Caco-2 (cell line): ENCODE measurements at regions of chr6 and their contacts with region 1.

Region 1: GRCh38 chr6:132530293-132530974 is 7.6 kb upstream of the TAAR9 start:
- DNase-seq: peak; percentile 57 to 72
- H3K4me3 ChIP-seq: peak overlapping the region; percentile 9; the same call in 1 of the 2 replicates
- H3K4me3 Mint-ChIP-seq: no peak overlapping the region
- H3K27ac Mint-ChIP-seq: no peak overlapping the region
- H3K4me1 ChIP-seq: no peaks in the 10 kb centered on the region
- H3K4me1 Mint-ChIP-seq: no peaks in the 10 kb centered on the region
- H3K27me3 ChIP-seq: no peaks in the 10 kb centered on the region
- H3K27me3 Mint-ChIP-seq: no peaks in the 10 kb centered on the region
- CTCF ChIP-seq: peak; percentile 70 to 73

Region 2: GRCh38 chr6:132633362-132633761 is 102.9 kb after region 1 on chr6:
- CTCF ChIA-PET with region 1: no interaction called
- POLR2A ChIA-PET with region 1: no interaction called
- intact Hi-C with region 1: no loop called
- DNase-seq: no peak
- H3K4me3 ChIP-seq: no peak overlapping the region
- H3K4me3 Mint-ChIP-seq: no peak overlapping the region
- H3K27ac Mint-ChIP-seq: no peak overlapping the region
- H3K4me1 ChIP-seq: peaks cover 21% of the 10 kb centered on the region
- H3K4me1 Mint-ChIP-seq: peaks cover 13% of the 10 kb centered on the region
- H3K27me3 ChIP-seq: no peaks in the 10 kb centered on the region
- H3K27me3 Mint-ChIP-seq: no peaks in the 10 kb centered on the region
- CTCF ChIP-seq: no peak

Region 3: DNA sequence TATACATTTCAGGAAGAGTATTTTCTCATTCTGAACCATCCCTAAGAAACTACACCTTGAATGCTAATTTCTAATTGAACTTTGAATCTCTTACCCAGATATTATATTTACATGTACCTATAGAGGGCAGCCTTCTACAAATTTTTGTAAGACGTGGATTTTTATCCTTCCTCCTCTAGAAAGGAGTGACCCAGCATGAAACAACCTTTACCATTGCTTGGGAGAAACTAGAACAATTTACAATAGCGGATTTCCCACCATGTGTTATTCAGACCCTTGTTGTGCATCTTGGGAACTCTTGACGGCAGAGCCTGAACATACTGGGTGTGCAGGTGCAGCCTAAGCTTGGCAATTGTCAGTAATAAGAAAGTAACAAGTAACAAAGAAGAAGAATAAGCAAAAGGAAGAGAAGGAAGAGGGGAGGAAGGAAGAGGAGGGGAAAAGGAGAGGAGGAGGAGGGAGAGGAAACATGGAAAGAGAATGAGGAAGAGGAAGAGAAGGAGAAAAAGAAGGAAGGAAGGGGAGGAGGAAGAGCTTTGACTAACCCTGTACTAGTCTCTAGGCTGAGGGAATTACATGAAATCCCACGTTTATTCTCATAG is 139.4 kb after region 1 on chr6:
- CTCF ChIA-PET with region 1: no interaction called
- POLR2A ChIA-PET with region 1: no interaction called
- intact Hi-C with region 1: loop called (anchors 1 kb)
- DNase-seq: peak in 1 of 2 experiments; percentile 16
- H3K4me3 ChIP-seq: no peak overlapping the region
- H3K4me3 Mint-ChIP-seq: peak overlapping the region; percentile 22
- H3K27ac Mint-ChIP-seq: peak overlapping the region; percentile 40
- H3K4me1 ChIP-seq: peaks cover 42% of the 10 kb centered on the region
- H3K4me1 Mint-ChIP-seq: peaks cover 36% of the 10 kb centered on the region
- H3K27me3 ChIP-seq: no peaks in the 10 kb centered on the region
- H3K27me3 Mint-ChIP-seq: no peaks in the 10 kb centered on the region
- CTCF ChIP-seq: peak in 1 of 2 experiments; percentile 38

Region 4: GRCh38 chr6:132768051-132768517 is 237.7 kb after region 1 on chr6:
- CTCF ChIA-PET with region 1: interaction called, 5 read pairs
- POLR2A ChIA-PET with region 1: no interaction called
- intact Hi-C with region 1: loop called (anchors 1 kb)
- DNase-seq: peak; percentile 42 to 44
- H3K4me3 ChIP-seq: no peak overlapping the region
- H3K4me3 Mint-ChIP-seq: no peak overlapping the region
- H3K27ac Mint-ChIP-seq: no peak overlapping the region
- H3K4me1 ChIP-seq: no peaks in the 10 kb centered on the region
- H3K4me1 Mint-ChIP-seq: no peaks in the 10 kb centered on the region
- H3K27me3 ChIP-seq: no peaks in the 10 kb centered on the region
- H3K27me3 Mint-ChIP-seq: no peaks in the 10 kb centered on the region
- CTCF ChIP-seq: peak; percentile 22 to 55

Region 5: GRCh38 chr6:132798869-132799538 is 268.6 kb after region 1 on chr6:
- CTCF ChIA-PET with region 1: interaction called, 4 read pairs
- POLR2A ChIA-PET with region 1: no interaction called
- intact Hi-C with region 1: loop called (anchors 1 kb)
- DNase-seq: peak; percentile 78 to 79
- H3K4me3 ChIP-seq: peak overlapping the region; percentile 55
- H3K4me3 Mint-ChIP-seq: no peak overlapping the region
- H3K27ac Mint-ChIP-seq: peak overlapping the region; percentile 66
- H3K4me1 ChIP-seq: no peaks in the 10 kb centered on the region
- H3K4me1 Mint-ChIP-seq: no peaks in the 10 kb centered on the region
- H3K27me3 ChIP-seq: no peaks in the 10 kb centered on the region
- H3K27me3 Mint-ChIP-seq: no peaks in the 10 kb centered on the region
- CTCF ChIP-seq: peak; percentile 72 to 85